IMR-90 (cell line): ENCODE measurements at regions of chr6 and their contacts with region 1.

Region 1: GRCh38 chr6:119061215-119061614 is 17.2 kb downstream of the FAM184A start:
- DNase-seq: no peak
- ATAC-seq: no peak
- H3K4me3 ChIP-seq: no peak overlapping the region
- H3K27ac ChIP-seq: no peak overlapping the region
- H3K4me1 ChIP-seq: no peaks in the 10 kb centered on the region
- H3K27me3 ChIP-seq: no peaks in the 10 kb centered on the region
- CTCF ChIP-seq: no peak
- POLR2A ChIP-seq: no peak
- RAD21 ChIP-seq: no peak

Region 2: DNA sequence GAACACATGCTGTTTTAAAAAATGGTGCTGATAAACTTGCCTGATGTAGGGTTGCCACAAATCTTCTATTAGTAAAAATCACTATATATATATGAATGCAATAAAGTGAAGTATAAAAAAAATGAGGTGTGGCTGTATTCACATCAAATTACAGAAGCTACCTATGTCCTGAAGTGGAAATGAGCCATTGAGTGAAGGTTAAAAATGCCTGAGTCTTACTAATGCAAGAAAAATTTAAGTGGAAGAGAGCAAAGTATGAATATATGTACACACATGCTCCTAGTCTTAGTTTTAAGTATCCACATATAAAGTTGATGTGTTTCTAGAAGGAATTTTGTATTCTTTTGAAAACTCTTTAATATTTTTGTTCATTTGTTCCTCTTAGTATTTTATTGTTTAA is 1096.7 kb after region 1 on chr6:
- CTCF ChIA-PET with region 1: no interaction called
- POLR2A ChIA-PET with region 1: interaction called, 22 read pairs
- dilution Hi-C with region 1: no loop called
- in situ Hi-C with region 1: no loop called
- intact Hi-C with region 1: no loop called
- DNase-seq: no peak
- ATAC-seq: no peak
- H3K4me3 ChIP-seq: no peak overlapping the region
- H3K27ac ChIP-seq: no peak overlapping the region
- H3K4me1 ChIP-seq: no peaks in the 10 kb centered on the region
- H3K27me3 ChIP-seq: no peaks in the 10 kb centered on the region
- CTCF ChIP-seq: no peak
- POLR2A ChIP-seq: no peak
- RAD21 ChIP-seq: no peak